ENCODE measurements at regions of chr18 and their contacts with region 1.

Region 1: DNA sequence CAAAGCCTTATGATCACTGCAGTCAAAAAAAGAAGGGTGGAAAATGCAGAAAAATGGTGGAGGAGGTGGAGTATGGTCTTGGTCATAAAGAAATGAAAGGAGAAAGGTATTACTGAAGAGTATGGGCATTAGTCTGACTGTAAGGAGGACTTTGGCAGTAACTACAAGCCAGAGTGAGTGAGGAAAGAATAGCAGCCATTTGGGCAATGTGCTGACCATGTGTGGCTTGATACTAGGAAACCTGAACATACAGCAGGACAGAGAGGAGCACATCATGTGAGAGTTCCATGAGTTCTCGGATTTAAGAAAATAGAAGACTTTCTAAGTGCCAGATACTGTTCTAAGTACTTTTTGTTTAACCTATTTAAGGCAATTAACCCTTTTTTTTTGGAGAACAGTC is 8.5 kb downstream of the DTNA start:
- DNase-seq: no peak
- H3K4me3 ChIP-seq: no peak overlapping the region
- H3K27ac ChIP-seq: no peak overlapping the region
- H3K4me1 ChIP-seq: no peaks in the 10 kb centered on the region
- H3K27me3 ChIP-seq: no peaks in the 10 kb centered on the region
- CTCF ChIP-seq: no peak

Region 2: GRCh38 chr18:34767601-34768027 is 49.0 kb after region 1 on chr18:
- intact Hi-C with region 1: loop called (anchors 5 kb)
- DNase-seq: no peak
- H3K4me3 ChIP-seq: no peak overlapping the region
- H3K27ac ChIP-seq: no peak overlapping the region
- H3K4me1 ChIP-seq: peaks cover 0 to 17% (median 4%) of the 10 kb centered on the region in 4 donors
- H3K27me3 ChIP-seq: no peaks in the 10 kb centered on the region
- CTCF ChIP-seq: no peak